ENCODE measurements at regions of chr20 and their contacts with region 1.

Region 1: GRCh38 chr20:35883778-35884540 is 70.3 kb downstream of the SCAND1 start:
- DNase-seq: peak; percentile 52 to 59 (median 56)
- H3K4me3 ChIP-seq: no peak overlapping the region
- H3K4me3 Mint-ChIP-seq: no peak overlapping the region
- H3K27ac ChIP-seq: no peak overlapping the region
- H3K27ac Mint-ChIP-seq: peak overlapping the region in 5 of 7 donors; percentile 2 to 74 (median 42)
- H3K4me1 ChIP-seq: peaks cover 6% of the 10 kb centered on the region
- H3K4me1 Mint-ChIP-seq: peaks cover 7 to 16% (median 11%) of the 10 kb centered on the region in 4 donors
- H3K27me3 ChIP-seq: no peaks in the 10 kb centered on the region
- H3K27me3 Mint-ChIP-seq: no peaks in the 10 kb centered on the region

Region 2: DNA sequence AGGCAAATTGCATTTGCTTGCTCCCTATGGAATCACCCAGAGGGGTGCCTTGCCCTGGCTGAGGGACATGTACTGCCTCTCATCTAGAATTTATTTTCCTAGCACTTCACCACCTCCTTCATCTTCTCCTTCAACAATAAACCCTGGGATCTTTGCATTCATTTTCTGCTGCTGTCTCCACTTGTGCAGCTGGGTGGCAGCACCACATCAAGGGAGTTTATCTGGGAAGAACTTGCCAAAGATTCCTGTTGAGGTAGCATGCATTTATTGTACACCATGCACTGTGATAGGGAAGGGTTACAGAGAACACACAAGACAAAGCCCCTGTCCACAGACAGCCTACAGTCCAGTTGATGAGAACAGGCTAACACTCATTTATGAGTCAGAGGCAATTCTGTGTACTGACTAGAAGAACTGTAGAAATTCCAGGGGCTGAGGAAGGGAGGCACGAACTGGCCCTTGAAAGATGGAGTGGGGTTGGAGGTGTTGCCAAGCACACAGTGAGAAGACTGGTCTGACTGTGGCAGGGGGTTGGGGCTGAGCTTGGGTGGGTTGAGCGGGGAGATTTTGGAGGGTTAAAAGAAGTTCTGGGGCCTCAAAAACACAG is 372.0 kb before region 1 on chr20:
- CTCF ChIA-PET with region 1: interaction called, 3 read pairs
- POLR2A ChIA-PET with region 1: no interaction called
- intact Hi-C with region 1: loop called (anchors 1 kb)
- DNase-seq: no peak
- H3K4me3 ChIP-seq: no peak overlapping the region
- H3K4me3 Mint-ChIP-seq: no peak overlapping the region
- H3K27ac ChIP-seq: no peak overlapping the region
- H3K27ac Mint-ChIP-seq: peak overlapping the region in 3 of 7 donors; percentile 16 to 84 (median 57)
- H3K4me1 ChIP-seq: no peaks in the 10 kb centered on the region
- H3K4me1 Mint-ChIP-seq: peaks cover 0 to 4% (median under 1%) of the 10 kb centered on the region in 4 donors
- H3K27me3 ChIP-seq: no peaks in the 10 kb centered on the region
- H3K27me3 Mint-ChIP-seq: no peaks in the 10 kb centered on the region

Region 3: DNA sequence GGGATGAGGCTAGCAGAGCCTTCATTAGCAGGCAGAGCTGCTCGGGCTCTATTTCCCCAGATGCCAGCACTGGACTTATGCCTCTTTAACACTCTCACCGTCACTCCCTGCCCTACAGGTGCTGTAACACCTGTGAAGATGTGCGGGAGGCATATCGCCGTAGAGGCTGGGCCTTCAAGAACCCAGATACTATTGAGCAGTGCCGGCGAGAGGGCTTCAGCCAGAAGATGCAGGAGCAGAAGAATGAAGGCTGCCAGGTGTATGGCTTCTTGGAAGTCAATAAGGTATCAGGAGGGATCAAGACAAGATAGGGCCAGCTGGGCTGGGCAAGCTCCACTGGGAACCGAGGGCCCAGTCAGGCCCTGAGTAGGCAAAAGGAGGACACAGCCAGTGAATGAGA is 335.6 kb before region 1 on chr20:
- CTCF ChIA-PET with region 1: no interaction called
- POLR2A ChIA-PET with region 1: no interaction called
- intact Hi-C with region 1: no loop called
- DNase-seq: no peak
- H3K4me3 ChIP-seq: no peak overlapping the region
- H3K4me3 Mint-ChIP-seq: no peak overlapping the region
- H3K27ac ChIP-seq: no peak overlapping the region
- H3K27ac Mint-ChIP-seq: peak overlapping the region in 1 of 7 donors; percentile 25
- H3K4me1 ChIP-seq: no peaks in the 10 kb centered on the region
- H3K4me1 Mint-ChIP-seq: peaks cover 4 to 6% (median 4%) of the 10 kb centered on the region in 4 donors
- H3K27me3 ChIP-seq: no peaks in the 10 kb centered on the region
- H3K27me3 Mint-ChIP-seq: no peaks in the 10 kb centered on the region

Region 4: DNA sequence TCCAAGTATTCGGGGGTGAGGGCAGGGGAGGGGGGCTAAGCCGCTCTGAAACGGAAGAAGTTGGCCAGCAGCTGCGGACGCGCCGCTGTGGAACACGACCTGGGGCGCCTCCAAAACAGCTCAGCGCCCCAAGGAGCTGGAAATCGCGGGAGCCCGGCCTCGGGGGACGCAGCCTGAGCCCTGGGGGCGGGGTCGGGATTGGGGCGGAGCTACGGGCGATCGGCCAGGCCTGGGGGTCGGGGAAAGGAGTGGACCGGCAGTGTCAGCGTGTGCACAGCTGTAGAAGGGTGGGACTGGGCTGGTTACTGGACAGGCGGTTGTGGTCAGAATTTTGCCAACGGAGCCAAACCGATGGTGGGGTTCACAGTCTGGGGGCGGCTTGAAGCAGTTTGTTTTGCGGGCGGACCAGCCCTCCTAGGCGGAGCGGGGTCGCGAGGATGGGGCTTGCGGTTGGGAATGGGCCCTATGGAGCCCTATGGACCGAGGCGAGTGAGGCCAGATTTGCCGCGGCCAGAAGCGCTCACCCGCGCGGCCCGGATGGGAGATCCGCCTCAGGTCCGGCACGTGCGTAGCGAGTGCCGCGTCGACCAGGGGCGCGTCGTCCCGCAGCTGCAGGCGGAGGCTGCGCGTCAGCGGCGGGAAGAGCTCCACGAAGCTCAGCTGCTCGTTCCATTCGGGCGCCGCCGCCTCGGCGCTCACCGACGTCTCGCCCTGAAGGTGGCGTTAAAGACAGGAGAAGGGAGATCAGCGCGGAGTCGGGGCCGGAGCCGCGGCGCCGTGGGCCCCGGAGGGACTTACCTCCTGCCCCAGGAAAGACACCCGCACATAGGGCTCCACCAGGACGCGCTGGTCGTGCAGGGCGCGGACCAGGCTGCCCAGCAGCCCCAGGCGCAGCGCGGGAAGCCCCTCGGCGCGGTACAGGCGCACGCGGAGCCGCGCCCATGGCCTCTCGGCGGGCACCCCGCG is 282.7 kb before region 1 on chr20:
- CTCF ChIA-PET with region 1: interaction called, 5 read pairs
- POLR2A ChIA-PET with region 1: interaction called, 5 read pairs
- intact Hi-C with region 1: loop called (anchors 1 kb)
- DNase-seq: peak; percentile 78 to 83 (median 79)
- H3K4me3 ChIP-seq: peak overlapping the region; percentile 29 to 50
- H3K4me3 Mint-ChIP-seq: peak overlapping the region; percentile 77 to 85 (median 80)
- H3K27ac ChIP-seq: no peak overlapping the region
- H3K27ac Mint-ChIP-seq: peak overlapping the region in 6 of 7 donors; percentile 22 to 81 (median 52)
- H3K4me1 ChIP-seq: peaks cover 17% of the 10 kb centered on the region
- H3K4me1 Mint-ChIP-seq: peaks cover 2 to 15% (median 4%) of the 10 kb centered on the region in 4 donors
- H3K27me3 ChIP-seq: no peaks in the 10 kb centered on the region
- H3K27me3 Mint-ChIP-seq: peaks cover 2 to 6% of the 10 kb centered on the region in 2 donors

Region 5: DNA sequence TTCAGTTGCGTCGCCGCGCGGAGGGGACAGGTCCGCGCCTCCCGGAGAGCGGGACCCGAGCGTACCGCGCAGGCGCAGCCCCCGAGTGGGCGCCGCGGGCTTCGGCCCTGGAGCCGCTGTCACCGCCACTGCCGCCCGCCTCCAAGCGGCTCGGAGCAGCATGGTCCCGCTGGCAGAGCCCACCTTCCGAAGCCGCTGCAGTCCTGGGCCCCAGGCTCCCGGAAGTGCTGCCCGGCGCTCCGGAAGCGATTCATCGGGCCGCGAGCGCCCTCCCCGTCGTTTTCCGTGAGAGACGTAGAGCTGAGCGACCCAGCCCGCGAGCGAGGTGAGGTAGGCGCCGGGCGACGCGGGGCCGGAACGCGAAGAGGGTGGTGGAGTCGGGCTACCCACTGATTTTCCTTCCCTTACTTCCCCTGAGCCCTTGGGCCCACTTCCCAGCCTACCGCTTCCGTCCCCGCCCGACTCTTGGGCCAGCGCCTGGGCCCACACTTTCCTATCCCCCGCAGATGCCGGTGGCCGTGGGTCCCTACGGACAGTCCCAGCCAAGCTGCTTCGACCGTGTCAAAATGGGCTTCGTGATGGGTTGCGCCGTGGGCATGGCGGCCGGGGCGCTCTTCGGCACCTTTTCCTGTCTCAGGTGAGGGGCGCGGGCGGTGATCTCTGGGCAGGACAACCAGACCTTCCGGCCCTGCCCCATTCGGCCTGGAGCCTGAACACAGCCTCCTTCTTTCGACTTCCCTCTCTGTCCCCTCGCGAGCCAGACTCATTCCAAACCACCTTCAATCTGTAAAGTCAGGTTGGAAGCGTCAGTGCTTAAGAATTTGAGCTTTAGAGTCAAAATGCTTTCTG is 184.6 kb before region 1 on chr20 and contains the starts of genes NFS1 and ROMO1:
- CTCF ChIA-PET with region 1: no interaction called
- POLR2A ChIA-PET with region 1: interaction called, 3 read pairs
- intact Hi-C with region 1: loop called (anchors 5 kb)
- DNase-seq: peak; percentile 82 to 88 (median 83)
- H3K4me3 ChIP-seq: peak within 1 kb of the TSS; percentile 90 to 92
- H3K4me3 Mint-ChIP-seq: peak within 1 kb of the TSS; percentile 92 to 99 (median 95)
- H3K27ac ChIP-seq: peak within 1 kb of the TSS; percentile 84
- H3K27ac Mint-ChIP-seq: peak within 1 kb of the TSS; percentile 93 to 99 (median 97)
- H3K4me1 ChIP-seq: peaks cover 38% of the 10 kb centered on the region
- H3K4me1 Mint-ChIP-seq: peaks cover 33 to 67% (median 42%) of the 10 kb centered on the region in 4 donors
- H3K27me3 ChIP-seq: no peaks in the 10 kb centered on the region
- H3K27me3 Mint-ChIP-seq: no peaks in the 10 kb centered on the region
- total RNA-seq, gene NFS1: 30.3 to 33.6 TPM
- total RNA-seq, gene ROMO1: 38.4 to 43.8 TPM

Region 6: DNA sequence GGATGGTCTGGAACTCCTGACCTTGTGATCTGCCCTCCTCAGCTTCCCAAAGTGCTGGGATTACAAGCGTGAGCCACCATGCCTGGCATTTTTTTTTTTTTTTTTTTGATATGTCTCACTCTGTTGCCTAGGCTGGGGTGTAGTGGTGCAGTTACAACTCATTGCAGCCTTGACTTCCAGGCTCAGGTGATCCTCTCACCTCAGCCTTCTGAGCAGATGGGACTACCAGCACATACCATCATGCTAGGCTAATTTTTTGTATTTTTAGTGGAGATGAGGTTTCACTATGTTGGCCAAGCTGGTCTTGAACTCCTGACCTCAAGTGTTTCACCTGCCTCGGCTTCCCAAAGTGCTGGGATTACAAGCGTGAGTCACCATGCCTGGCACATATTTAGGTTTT is 77.9 kb before region 1 on chr20:
- CTCF ChIA-PET with region 1: no interaction called
- POLR2A ChIA-PET with region 1: no interaction called
- intact Hi-C with region 1: no loop called
- DNase-seq: no peak
- H3K4me3 ChIP-seq: no peak overlapping the region
- H3K4me3 Mint-ChIP-seq: no peak overlapping the region
- H3K27ac ChIP-seq: no peak overlapping the region
- H3K27ac Mint-ChIP-seq: peak overlapping the region in 1 of 7 donors; percentile 27
- H3K4me1 ChIP-seq: no peaks in the 10 kb centered on the region
- H3K4me1 Mint-ChIP-seq: peaks cover 9 to 27% (median 12%) of the 10 kb centered on the region in 4 donors
- H3K27me3 ChIP-seq: no peaks in the 10 kb centered on the region
- H3K27me3 Mint-ChIP-seq: no peaks in the 10 kb centered on the region

Region 7: DNA sequence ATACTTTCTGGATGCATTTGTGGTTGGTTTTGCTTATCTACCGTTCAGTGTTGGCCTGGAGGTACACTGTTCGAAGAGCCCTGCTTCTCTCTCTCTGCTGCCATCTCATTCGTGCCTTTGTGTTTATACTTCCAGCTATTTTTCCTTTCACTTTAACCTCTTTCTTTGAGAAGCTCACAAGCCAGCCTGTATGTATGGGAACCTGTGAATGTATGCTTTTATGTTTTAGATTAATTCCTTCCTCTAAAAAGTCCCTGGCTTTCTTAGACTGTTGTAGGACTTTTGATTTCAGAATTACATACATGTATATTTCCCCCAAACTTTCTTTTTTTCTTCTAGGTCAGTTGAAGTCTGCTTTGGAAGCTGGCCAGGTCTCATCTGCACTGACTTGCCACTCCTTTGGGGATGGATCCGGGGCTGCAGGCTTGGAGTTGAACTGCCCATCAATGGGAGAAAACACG is 12.6 kb before region 1 on chr20:
- CTCF ChIA-PET with region 1: interaction called, 12 read pairs
- POLR2A ChIA-PET with region 1: interaction called, 3 read pairs
- intact Hi-C with region 1: no loop called
- DNase-seq: no peak
- H3K4me3 ChIP-seq: no peak overlapping the region
- H3K4me3 Mint-ChIP-seq: no peak overlapping the region
- H3K27ac ChIP-seq: no peak overlapping the region
- H3K27ac Mint-ChIP-seq: peak overlapping the region in 5 of 7 donors; percentile 1 to 71 (median 32)
- H3K4me1 ChIP-seq: no peaks in the 10 kb centered on the region
- H3K4me1 Mint-ChIP-seq: peaks cover 4 to 11% (median 6%) of the 10 kb centered on the region in 4 donors
- H3K27me3 ChIP-seq: no peaks in the 10 kb centered on the region
- H3K27me3 Mint-ChIP-seq: no peaks in the 10 kb centered on the region

Region 8: DNA sequence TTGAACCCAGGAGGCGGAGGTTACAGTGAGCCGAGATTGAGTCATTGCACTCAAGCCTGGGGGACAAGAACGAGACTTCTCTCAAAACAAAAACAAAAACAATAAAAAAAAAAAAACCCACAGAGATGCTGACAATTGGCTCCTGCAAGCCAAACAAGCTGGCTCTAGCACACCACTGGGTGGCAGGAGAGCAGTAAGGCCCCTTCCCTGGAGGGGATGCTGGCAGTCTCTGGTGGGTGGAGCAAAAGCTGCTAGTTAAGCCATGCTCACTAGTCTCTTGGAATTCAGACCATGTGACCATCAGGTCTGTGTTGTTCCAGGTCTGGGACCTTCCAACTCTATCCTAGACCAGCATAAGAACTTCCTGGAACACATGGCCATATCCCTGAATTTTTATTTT is 908.5 kb after region 1 on chr20:
- CTCF ChIA-PET with region 1: no interaction called
- POLR2A ChIA-PET with region 1: no interaction called
- intact Hi-C with region 1: no loop called
- DNase-seq: no peak
- H3K4me3 ChIP-seq: no peak overlapping the region
- H3K4me3 Mint-ChIP-seq: no peak overlapping the region
- H3K27ac ChIP-seq: no peak overlapping the region
- H3K27ac Mint-ChIP-seq: no peak overlapping the region
- H3K4me1 ChIP-seq: no peaks in the 10 kb centered on the region
- H3K4me1 Mint-ChIP-seq: no peaks in the 10 kb centered on the region
- H3K27me3 ChIP-seq: no peaks in the 10 kb centered on the region
- H3K27me3 Mint-ChIP-seq: peaks cover 0 to 1% of the 10 kb centered on the region in 2 donors

Measured in CD4-positive, alpha-beta memory T cell (primary cell).